BJ (cell line): ENCODE measurements at regions of chr3 and their contacts with region 1.

Region 1: GRCh38 chr3:102229062-102229655 is 205.7 kb upstream of the ZPLD1 start:
- DNase-seq: peak; percentile 19
- H3K4me3 ChIP-seq: no peak overlapping the region
- H3K27me3 ChIP-seq: no peaks in the 10 kb centered on the region
- CTCF ChIP-seq: peak; percentile 94

Region 2: DNA sequence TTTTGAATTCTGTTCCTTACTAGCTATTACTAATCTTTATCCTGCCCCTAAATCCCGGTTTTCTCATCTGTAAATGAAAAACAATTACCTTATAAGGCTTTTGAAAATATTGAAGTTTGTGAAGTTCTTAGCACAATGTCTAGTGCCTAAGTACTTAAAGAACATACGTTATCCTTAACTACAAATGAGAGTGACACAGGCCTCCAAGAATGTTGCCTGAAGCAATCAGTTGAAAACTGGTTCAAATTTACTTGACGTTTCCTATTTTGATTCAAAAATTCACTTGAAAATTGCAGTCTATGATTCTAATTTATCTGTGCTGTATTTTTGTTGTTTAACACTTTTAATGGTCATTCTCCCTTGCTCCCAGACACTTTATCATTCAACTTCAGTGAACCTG is 719.3 kb before region 1 on chr3:
- CTCF ChIA-PET with region 1: no interaction called
- POLR2A ChIA-PET with region 1: no interaction called
- DNase-seq: no peak
- H3K4me3 ChIP-seq: no peak overlapping the region
- H3K27me3 ChIP-seq: no peaks in the 10 kb centered on the region
- CTCF ChIP-seq: no peak

Region 3: GRCh38 chr3:101809178-101810021 is 419.8 kb before region 1 on chr3:
- CTCF ChIA-PET with region 1: interaction called, 208 read pairs
- POLR2A ChIA-PET with region 1: no interaction called
- DNase-seq: no peak
- H3K4me3 ChIP-seq: no peak overlapping the region
- H3K27me3 ChIP-seq: no peaks in the 10 kb centered on the region
- CTCF ChIP-seq: peak; percentile 59

Region 4: GRCh38 chr3:101824702-101825101 is 404.5 kb before region 1 on chr3:
- CTCF ChIA-PET with region 1: interaction called, 16 read pairs
- POLR2A ChIA-PET with region 1: no interaction called
- DNase-seq: no peak
- H3K4me3 ChIP-seq: no peak overlapping the region
- H3K27me3 ChIP-seq: no peaks in the 10 kb centered on the region
- CTCF ChIP-seq: no peak

Region 5: GRCh38 chr3:101857279-101857678 is 371.9 kb before region 1 on chr3:
- CTCF ChIA-PET with region 1: interaction called, 17 read pairs
- POLR2A ChIA-PET with region 1: no interaction called
- DNase-seq: no peak
- H3K4me3 ChIP-seq: no peak overlapping the region
- H3K27me3 ChIP-seq: no peaks in the 10 kb centered on the region
- CTCF ChIP-seq: no peak

Region 6: DNA sequence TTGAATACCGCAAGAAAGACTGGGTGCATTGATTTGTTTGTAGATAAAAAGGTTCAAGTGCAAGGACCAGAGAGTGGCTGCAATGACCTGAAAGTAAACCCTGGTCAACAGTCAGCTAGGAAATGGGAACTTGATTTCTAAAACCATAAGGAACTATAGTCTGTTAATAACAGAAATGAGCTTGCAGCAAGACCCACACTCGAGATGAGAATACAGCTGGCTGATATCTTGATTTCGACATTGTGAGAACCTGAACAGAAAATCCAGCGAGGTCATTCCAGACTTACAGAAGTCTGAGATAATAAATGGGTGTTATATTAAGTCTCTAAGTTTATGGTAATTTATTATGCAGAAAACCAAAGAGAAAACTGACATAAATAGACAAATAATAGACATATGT is 202.5 kb before region 1 on chr3:
- CTCF ChIA-PET with region 1: no interaction called
- POLR2A ChIA-PET with region 1: no interaction called
- DNase-seq: no peak
- H3K4me3 ChIP-seq: no peak overlapping the region
- H3K27me3 ChIP-seq: no peaks in the 10 kb centered on the region
- CTCF ChIP-seq: no peak

Region 7: GRCh38 chr3:102240720-102241119 is 11.6 kb after region 1 on chr3:
- CTCF ChIA-PET with region 1: interaction called, 26 read pairs
- POLR2A ChIA-PET with region 1: no interaction called
- DNase-seq: no peak
- H3K4me3 ChIP-seq: no peak overlapping the region
- H3K27me3 ChIP-seq: peaks cover 3% of the 10 kb centered on the region; the same call in 1 of the 2 replicates
- CTCF ChIP-seq: no peak

Region 8: DNA sequence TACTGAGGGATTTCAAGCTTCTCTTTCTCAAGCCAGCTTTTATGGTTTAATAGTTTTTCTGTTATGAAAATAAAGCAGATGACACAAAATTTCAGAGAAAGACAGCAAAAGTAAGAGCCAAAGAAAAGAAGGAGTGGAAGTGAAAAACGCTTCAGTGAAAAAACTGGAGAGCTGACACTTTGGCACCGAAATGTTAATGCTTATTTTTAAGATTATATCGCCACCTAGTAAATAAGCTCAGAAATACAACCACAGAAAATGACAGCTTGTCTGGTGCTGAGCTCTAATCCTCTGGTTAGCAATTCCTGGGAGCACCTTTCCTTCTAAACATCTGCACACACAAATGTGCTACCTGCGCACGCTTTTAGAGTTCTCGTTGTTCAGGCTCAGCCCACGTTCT is 307.3 kb after region 1 on chr3:
- CTCF ChIA-PET with region 1: interaction called, 50 read pairs
- POLR2A ChIA-PET with region 1: no interaction called
- DNase-seq: no peak
- H3K4me3 ChIP-seq: no peak overlapping the region
- H3K27me3 ChIP-seq: no peaks in the 10 kb centered on the region
- CTCF ChIP-seq: peak; percentile 36

Region 9: GRCh38 chr3:103644450-103644849 is 1415.3 kb after region 1 on chr3:
- CTCF ChIA-PET with region 1: no interaction called
- POLR2A ChIA-PET with region 1: no interaction called
- DNase-seq: no peak
- H3K4me3 ChIP-seq: no peak overlapping the region
- H3K27me3 ChIP-seq: no peaks in the 10 kb centered on the region
- CTCF ChIP-seq: no peak